ENCODE measurements at regions of chr6 and their contacts with region 1.

Region 1: GRCh38 chr6:20085817-20086216 is 126.5 kb downstream of the MBOAT1 start:
- DNase-seq: no peak
- ATAC-seq: no peak

Region 2: DNA sequence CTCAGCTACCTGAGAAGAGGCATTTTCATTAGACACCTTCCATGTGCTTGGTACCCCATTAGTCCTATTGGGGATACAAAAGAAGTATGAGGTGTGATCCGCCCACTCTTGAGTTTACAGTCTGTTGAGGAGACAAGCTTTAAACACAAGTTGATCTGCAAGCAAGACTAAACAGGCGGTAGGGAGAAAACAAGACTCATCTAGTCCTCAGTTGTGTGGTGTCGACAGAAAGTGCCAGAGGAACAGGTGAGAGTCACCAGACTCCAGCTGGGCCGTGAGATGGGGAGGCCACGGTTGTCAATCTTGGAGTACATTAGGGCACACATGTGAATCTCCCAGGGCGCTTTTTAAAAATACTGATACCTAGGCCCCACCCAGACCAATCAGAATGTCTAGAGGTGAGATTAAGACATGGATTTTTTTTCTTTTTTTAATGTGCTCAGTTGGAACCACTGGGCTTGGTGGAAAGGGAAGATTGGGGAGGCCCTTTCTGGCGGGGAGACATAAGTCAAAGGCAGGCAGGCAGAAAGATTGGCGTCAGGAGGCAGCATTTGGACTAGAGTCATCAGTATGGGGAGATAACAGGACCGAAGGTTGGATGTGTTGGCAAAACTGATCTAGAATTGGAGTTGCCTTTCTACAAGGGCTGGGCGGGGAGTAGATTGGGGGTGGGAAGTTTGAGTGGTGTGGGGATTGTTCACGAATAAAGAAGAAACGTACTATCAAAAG is 326.3 kb after region 1 on chr6:
- intact Hi-C with region 1: loop called in 1 of 2 experiments (anchors 5 kb)
- DNase-seq: no peak
- ATAC-seq: no peak

Measured in left cardiac atrium (tissue), 4 donors.